ENCODE measurements at regions of chr21 and their contacts with region 1.

Region 1: GRCh38 chr21:33412832-33413519 is 9.8 kb downstream of the IFNGR2 start:
- DNase-seq: peak; percentile 23
- H3K4me3 ChIP-seq: no peak overlapping the region
- H3K27ac ChIP-seq: no peak overlapping the region
- H3K4me1 ChIP-seq: peaks cover 12% of the 10 kb centered on the region
- H3K27me3 ChIP-seq: no peaks in the 10 kb centered on the region
- CTCF ChIP-seq: no peak

Region 2: GRCh38 chr21:34092262-34092921 is 679.4 kb after region 1 on chr21:
- CTCF ChIA-PET with region 1: interaction called, 10 read pairs
- dilution Hi-C with region 1: no loop called
- in situ Hi-C with region 1: no loop called
- intact Hi-C with region 1: no loop called
- DNase-seq: no peak
- H3K4me3 ChIP-seq: no peak overlapping the region
- H3K27ac ChIP-seq: no peak overlapping the region
- H3K4me1 ChIP-seq: no peaks in the 10 kb centered on the region
- H3K27me3 ChIP-seq: no peaks in the 10 kb centered on the region
- CTCF ChIP-seq: no peak